ENCODE measurements at regions of chr6 and their contacts with region 1.

Region 1: GRCh38 chr6:112113431-112113830 is 26.0 kb downstream of the FAM229B start:
- DNase-seq: peak; percentile 20
- ATAC-seq: peak; percentile 46; the same call in 1 of the 2 replicates
- H3K4me3 ChIP-seq: no peak overlapping the region
- H3K27ac ChIP-seq: no peak overlapping the region
- H3K4me1 ChIP-seq: peaks cover 4% of the 10 kb centered on the region
- H3K27me3 ChIP-seq: no peaks in the 10 kb centered on the region
- CTCF ChIP-seq: no peak
- POLR2A ChIP-seq: no peak
- RAD21 ChIP-seq: no peak

Region 2: GRCh38 chr6:112149719-112150263 is 36.4 kb after region 1 on chr6:
- CTCF ChIA-PET with region 1: interaction called, 3 read pairs
- POLR2A ChIA-PET with region 1: no interaction called
- dilution Hi-C with region 1: no loop called
- in situ Hi-C with region 1: no loop called
- intact Hi-C with region 1: loop called (anchors 5 kb)
- DNase-seq: peak; percentile 83
- ATAC-seq: peak; percentile 83
- H3K4me3 ChIP-seq: no peak overlapping the region
- H3K27ac ChIP-seq: peak overlapping the region; percentile 94; the same call in 1 of the 2 replicates
- H3K4me1 ChIP-seq: peaks cover 9% of the 10 kb centered on the region
- H3K27me3 ChIP-seq: no peaks in the 10 kb centered on the region
- CTCF ChIP-seq: no peak
- POLR2A ChIP-seq: no peak
- RAD21 ChIP-seq: no peak